ENCODE measurements at regions of chr6 and their contacts with region 1.

Region 1: DNA sequence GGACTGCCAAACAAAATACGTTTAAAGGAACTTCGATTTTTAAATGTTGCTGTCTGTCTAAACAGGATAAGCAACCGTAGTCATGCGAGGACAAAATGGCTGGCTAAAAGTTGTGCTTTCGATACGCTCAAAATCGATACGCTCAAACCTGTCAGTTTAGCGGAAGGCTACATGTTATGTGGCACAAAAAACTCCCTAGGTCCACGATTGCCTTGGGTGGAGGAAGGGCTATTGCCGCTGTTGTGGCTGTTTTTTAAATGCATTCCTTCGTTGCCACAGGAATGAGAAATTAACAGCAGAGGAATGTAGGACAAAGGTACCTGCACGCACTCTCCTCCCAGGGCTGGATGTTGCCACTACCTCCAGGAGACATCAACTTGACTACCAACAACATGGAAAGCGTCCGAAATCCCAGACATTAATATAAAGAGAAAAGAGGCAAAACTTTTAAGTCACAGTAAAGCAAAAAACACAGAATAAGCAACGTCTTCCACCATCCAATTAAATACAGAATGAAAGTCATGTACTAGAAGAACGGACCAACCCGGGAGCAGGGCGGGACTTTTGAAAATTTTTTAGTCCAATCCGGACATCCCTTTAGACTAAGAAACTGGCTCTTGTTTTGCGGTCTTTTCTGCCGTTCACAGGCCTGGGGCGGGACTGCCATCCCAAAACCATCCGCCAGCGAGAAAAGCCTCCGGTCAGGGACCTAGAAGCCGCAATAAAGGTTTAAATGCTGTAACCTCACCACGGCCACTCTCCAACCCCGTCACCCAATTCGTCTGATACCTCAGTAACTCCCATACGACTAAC is 32.2 kb upstream of the HFE start:
- DNase-seq: peak; percentile 54 to 94 (median 90)
- ATAC-seq: peak; percentile 81
- H3K4me3 ChIP-seq: peak overlapping the region; percentile 93
- H3K4me3 Mint-ChIP-seq: peak overlapping the region; percentile 88 to 99 (median 95)
- H3K27ac ChIP-seq: peak overlapping the region; percentile 83
- H3K27ac Mint-ChIP-seq: peak overlapping the region; percentile 95 to 99 (median 98)
- H3K4me1 ChIP-seq: peaks cover 0 to 14% of the 10 kb centered on the region in 2 donors
- H3K4me1 Mint-ChIP-seq: peaks cover 9 to 52% (median 10%) of the 10 kb centered on the region in 7 donors
- H3K27me3 ChIP-seq: no peaks in the 10 kb centered on the region
- H3K27me3 Mint-ChIP-seq: peaks cover 0 to 10% (median 0%) of the 10 kb centered on the region in 5 donors

Region 2: GRCh38 chr6:25922301-25922700 is 132.8 kb before region 1 on chr6:
- CTCF ChIA-PET with region 1: no interaction called
- POLR2A ChIA-PET with region 1: no interaction called
- intact Hi-C with region 1: no loop called
- DNase-seq: no peak
- ATAC-seq: no peak
- H3K4me3 ChIP-seq: no peak overlapping the region
- H3K4me3 Mint-ChIP-seq: no peak overlapping the region
- H3K27ac ChIP-seq: no peak overlapping the region
- H3K27ac Mint-ChIP-seq: no peak overlapping the region
- H3K4me1 ChIP-seq: no peaks in the 10 kb centered on the region
- H3K4me1 Mint-ChIP-seq: peaks cover 0 to 13% (median 0%) of the 10 kb centered on the region in 7 donors
- H3K27me3 ChIP-seq: no peaks in the 10 kb centered on the region
- H3K27me3 Mint-ChIP-seq: no peaks in the 10 kb centered on the region

Region 3: DNA sequence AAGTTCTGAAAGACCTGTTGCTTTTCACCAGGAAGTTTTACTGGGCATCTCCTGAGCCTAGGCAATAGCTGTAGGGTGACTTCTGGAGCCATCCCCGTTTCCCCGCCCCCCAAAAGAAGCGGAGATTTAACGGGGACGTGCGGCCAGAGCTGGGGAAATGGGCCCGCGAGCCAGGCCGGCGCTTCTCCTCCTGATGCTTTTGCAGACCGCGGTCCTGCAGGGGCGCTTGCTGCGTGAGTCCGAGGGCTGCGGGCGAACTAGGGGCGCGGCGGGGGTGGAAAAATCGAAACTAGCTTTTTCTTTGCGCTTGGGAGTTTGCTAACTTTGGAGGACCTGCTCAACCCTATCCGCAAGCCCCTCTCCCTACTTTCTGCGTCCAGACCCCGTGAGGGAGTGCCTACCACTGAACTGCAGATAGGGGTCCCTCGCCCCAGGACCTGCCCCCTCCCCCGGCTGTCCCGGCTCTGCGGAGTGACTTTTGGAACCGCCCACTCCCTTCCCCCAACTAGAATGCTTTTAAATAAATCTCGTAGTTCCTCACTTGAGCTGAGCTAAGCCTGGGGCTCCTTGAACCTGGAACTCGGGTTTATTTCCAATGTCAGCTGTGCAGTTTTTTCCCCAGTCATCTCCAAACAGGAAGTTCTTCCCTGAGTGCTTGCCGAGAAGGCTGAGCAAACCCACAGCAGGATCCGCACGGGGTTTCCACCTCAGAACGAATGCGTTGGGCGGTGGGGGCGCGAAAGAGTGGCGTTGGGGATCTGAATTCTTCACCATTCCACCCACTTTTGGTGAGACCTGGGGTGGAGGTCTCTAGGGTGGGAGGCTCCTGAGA is 32.4 kb after region 1 on chr6 and contains the start of gene HFE:
- CTCF ChIA-PET with region 1: interaction called, 232 read pairs
- POLR2A ChIA-PET with region 1: interaction called, 254 read pairs
- intact Hi-C with region 1: no loop called
- DNase-seq: peak in 8 of 9 donors; percentile 32 to 46 (median 38)
- ATAC-seq: peak; percentile 41
- H3K4me3 ChIP-seq: peak within 1 kb of the TSS; percentile 88
- H3K4me3 Mint-ChIP-seq: peak within 1 kb of the TSS; percentile 84 to 91 (median 88)
- H3K27ac ChIP-seq: peak within 1 kb of the TSS; percentile 72
- H3K27ac Mint-ChIP-seq: peak within 1 kb of the TSS; percentile 73 to 91 (median 84)
- H3K4me1 ChIP-seq: peaks cover 18 to 23% of the 10 kb centered on the region in 2 donors
- H3K4me1 Mint-ChIP-seq: peaks cover 31 to 51% (median 39%) of the 10 kb centered on the region in 7 donors
- H3K27me3 ChIP-seq: no peaks in the 10 kb centered on the region
- H3K27me3 Mint-ChIP-seq: peaks cover 0 to 5% (median 5%) of the 10 kb centered on the region in 5 donors
- total RNA-seq, gene HFE: 1.5 to 4.6 (median 2.5) TPM

Region 4: GRCh38 chr6:26183581-26184366 is 128.7 kb after region 1 on chr6:
- CTCF ChIA-PET with region 1: no interaction called
- POLR2A ChIA-PET with region 1: interaction called, 19 read pairs
- intact Hi-C with region 1: no loop called
- DNase-seq: peak; percentile 43 to 83 (median 77)
- ATAC-seq: peak; percentile 91
- H3K4me3 ChIP-seq: peak overlapping the region; percentile 82
- H3K4me3 Mint-ChIP-seq: peak overlapping the region; percentile 84 to 99 (median 98)
- H3K27ac ChIP-seq: peak overlapping the region; percentile 76
- H3K27ac Mint-ChIP-seq: peak overlapping the region; percentile 83 to 99 (median 90)
- H3K4me1 ChIP-seq: peaks cover 13 to 30% of the 10 kb centered on the region in 2 donors
- H3K4me1 Mint-ChIP-seq: peaks cover 19 to 59% (median 49%) of the 10 kb centered on the region in 7 donors
- H3K27me3 ChIP-seq: no peaks in the 10 kb centered on the region
- H3K27me3 Mint-ChIP-seq: no peaks in the 10 kb centered on the region

Region 5: DNA sequence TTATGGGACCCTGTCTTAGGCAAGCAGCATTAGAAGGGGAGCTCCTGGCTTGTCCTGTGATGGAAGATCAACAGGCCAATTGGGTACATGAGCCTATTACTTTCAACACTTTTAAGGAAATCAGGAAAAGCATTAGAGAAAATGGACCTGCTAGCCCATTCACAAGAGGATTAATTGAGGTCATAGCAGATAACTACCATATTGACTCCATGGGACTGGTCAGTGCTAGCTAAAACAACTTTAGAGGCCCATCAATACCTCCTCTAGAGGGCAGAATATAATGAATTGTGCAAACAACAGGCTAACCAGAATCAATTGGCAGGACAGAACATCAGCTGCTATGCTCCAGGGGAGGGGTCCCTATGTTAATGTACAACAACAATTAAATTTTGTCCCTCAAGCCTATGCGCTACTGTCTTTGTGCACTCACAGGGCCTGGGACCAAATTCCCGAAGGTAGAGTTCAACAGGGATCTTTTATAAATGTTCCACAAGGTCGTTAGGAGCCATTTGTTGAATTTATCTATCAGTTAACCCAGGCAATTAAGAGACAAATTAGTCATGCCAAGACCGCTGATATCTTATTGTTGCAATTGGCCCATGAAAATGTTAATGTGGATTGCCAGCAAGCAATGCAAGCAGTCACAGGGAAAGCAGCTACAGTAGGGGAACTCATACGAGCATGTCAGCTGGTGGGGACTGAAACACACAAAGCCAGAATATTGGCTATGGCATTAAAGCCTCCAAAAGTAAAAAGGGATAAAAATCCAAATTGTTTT is 203.3 kb after region 1 on chr6:
- CTCF ChIA-PET with region 1: no interaction called
- POLR2A ChIA-PET with region 1: no interaction called
- intact Hi-C with region 1: no loop called
- DNase-seq: no peak
- ATAC-seq: no peak
- H3K4me3 ChIP-seq: no peak overlapping the region
- H3K4me3 Mint-ChIP-seq: no peak overlapping the region
- H3K27ac ChIP-seq: no peak overlapping the region
- H3K27ac Mint-ChIP-seq: no peak overlapping the region
- H3K4me1 ChIP-seq: peaks cover 0 to 3% of the 10 kb centered on the region in 2 donors
- H3K4me1 Mint-ChIP-seq: peaks cover 6 to 23% (median 11%) of the 10 kb centered on the region in 7 donors
- H3K27me3 ChIP-seq: no peaks in the 10 kb centered on the region
- H3K27me3 Mint-ChIP-seq: no peaks in the 10 kb centered on the region

Measured in naive thymus-derived CD4-positive, alpha-beta T cell (primary cell).